Natural killer cell (primary cell): ENCODE measurements at regions of chr7 and their contacts with region 1.

Region 1: DNA sequence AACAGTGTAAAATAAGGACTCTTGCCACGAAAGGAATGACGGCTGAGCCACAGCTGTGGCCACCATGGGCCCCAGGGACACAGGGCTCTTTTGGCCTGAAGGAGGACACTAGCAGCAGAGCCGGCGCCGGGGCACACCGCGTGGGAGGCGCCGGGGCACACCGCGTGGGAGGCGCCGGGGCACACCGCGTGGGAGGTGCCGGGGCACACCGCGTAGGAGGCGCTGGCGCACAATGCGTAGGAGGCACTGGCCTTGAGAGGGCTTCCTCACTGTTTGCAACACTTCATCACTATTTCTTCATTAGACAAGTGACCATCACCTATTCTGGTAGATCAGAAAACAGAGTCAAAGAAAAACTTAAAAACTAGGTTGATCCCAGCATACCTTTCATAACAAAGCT is 23.4 kb downstream of the ESYT2 start:
- DNase-seq: no peak
- ATAC-seq: no peak
- H3K4me3 ChIP-seq: no peak overlapping the region
- H3K4me3 Mint-ChIP-seq: peak overlapping the region; percentile 37
- H3K27ac ChIP-seq: no peak overlapping the region
- H3K27ac Mint-ChIP-seq: peak overlapping the region; percentile 99
- H3K4me1 ChIP-seq: peaks cover 46% of the 10 kb centered on the region
- H3K4me1 Mint-ChIP-seq: peaks cover 56 to 75% of the 10 kb centered on the region in 2 donors
- H3K27me3 ChIP-seq: no peaks in the 10 kb centered on the region
- H3K27me3 Mint-ChIP-seq: no peaks in the 10 kb centered on the region
- CTCF ChIP-seq: no peak

Region 2: GRCh38 chr7:158595069-158595468 is 210.9 kb before region 1 on chr7:
- intact Hi-C with region 1: loop called (anchors 2 kb)
- DNase-seq: peak in 1 of 2 donors; percentile 47
- ATAC-seq: peak; percentile 51 to 84 (median 73)
- H3K4me3 ChIP-seq: no peak overlapping the region
- H3K4me3 Mint-ChIP-seq: no peak overlapping the region
- H3K27ac ChIP-seq: no peak overlapping the region
- H3K27ac Mint-ChIP-seq: no peak overlapping the region
- H3K4me1 ChIP-seq: no peaks in the 10 kb centered on the region
- H3K4me1 Mint-ChIP-seq: no peaks in the 10 kb centered on the region
- H3K27me3 ChIP-seq: no peaks in the 10 kb centered on the region
- H3K27me3 Mint-ChIP-seq: peaks cover 0 to 2% of the 10 kb centered on the region in 2 donors
- CTCF ChIP-seq: no peak

Region 3: DNA sequence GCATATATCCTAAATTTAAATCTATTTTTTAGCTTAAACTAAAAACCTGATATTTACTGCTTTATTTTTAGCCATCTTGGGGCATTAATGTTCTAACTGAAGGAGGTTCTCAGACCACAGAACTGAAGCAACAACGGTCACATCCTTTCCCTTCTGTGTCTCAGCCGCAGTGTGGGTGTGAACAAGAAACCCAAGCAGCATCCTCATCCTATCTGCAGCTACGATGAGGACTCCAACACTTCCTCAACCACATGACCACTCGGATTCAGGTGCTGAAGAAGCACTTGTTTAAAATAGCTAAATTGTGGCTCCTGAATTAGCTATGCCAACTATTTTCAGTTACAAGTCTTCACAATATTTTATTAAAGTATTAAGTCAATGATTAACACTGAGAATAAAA is 18.1 kb after region 1 on chr7:
- intact Hi-C with region 1: loop called (anchors 1 kb)
- DNase-seq: peak; percentile 82 to 92
- ATAC-seq: peak; percentile 64 to 87 (median 86)
- H3K4me3 ChIP-seq: peak overlapping the region; percentile 6
- H3K4me3 Mint-ChIP-seq: peak overlapping the region; percentile 79
- H3K27ac ChIP-seq: peak overlapping the region; percentile 66
- H3K27ac Mint-ChIP-seq: peak overlapping the region; percentile 88 to 89
- H3K4me1 ChIP-seq: peaks cover 55% of the 10 kb centered on the region
- H3K4me1 Mint-ChIP-seq: peaks cover 55% of the 10 kb centered on the region in 2 donors
- H3K27me3 ChIP-seq: no peaks in the 10 kb centered on the region
- H3K27me3 Mint-ChIP-seq: no peaks in the 10 kb centered on the region
- CTCF ChIP-seq: no peak

Region 4: GRCh38 chr7:158829342-158830210 is 23.6 kb after region 1 on chr7 and contains the start of gene ESYT2:
- intact Hi-C with region 1: loop called (anchors 1 kb)
- DNase-seq: peak; percentile 99 to 100
- ATAC-seq: peak; percentile 78 to 89 (median 80)
- H3K4me3 ChIP-seq: peak within 1 kb of the TSS; percentile 67
- H3K4me3 Mint-ChIP-seq: peak within 1 kb of the TSS; percentile 97
- H3K27ac ChIP-seq: peak within 1 kb of the TSS; percentile 97
- H3K27ac Mint-ChIP-seq: peak within 1 kb of the TSS; percentile 82 to 92
- H3K4me1 ChIP-seq: peaks cover 38% of the 10 kb centered on the region
- H3K4me1 Mint-ChIP-seq: peaks cover 37 to 41% of the 10 kb centered on the region in 2 donors
- H3K27me3 ChIP-seq: no peaks in the 10 kb centered on the region
- H3K27me3 Mint-ChIP-seq: no peaks in the 10 kb centered on the region
- CTCF ChIP-seq: no peak
- total RNA-seq, gene ESYT2: 137 to 163 (median 160) TPM

Region 5: DNA sequence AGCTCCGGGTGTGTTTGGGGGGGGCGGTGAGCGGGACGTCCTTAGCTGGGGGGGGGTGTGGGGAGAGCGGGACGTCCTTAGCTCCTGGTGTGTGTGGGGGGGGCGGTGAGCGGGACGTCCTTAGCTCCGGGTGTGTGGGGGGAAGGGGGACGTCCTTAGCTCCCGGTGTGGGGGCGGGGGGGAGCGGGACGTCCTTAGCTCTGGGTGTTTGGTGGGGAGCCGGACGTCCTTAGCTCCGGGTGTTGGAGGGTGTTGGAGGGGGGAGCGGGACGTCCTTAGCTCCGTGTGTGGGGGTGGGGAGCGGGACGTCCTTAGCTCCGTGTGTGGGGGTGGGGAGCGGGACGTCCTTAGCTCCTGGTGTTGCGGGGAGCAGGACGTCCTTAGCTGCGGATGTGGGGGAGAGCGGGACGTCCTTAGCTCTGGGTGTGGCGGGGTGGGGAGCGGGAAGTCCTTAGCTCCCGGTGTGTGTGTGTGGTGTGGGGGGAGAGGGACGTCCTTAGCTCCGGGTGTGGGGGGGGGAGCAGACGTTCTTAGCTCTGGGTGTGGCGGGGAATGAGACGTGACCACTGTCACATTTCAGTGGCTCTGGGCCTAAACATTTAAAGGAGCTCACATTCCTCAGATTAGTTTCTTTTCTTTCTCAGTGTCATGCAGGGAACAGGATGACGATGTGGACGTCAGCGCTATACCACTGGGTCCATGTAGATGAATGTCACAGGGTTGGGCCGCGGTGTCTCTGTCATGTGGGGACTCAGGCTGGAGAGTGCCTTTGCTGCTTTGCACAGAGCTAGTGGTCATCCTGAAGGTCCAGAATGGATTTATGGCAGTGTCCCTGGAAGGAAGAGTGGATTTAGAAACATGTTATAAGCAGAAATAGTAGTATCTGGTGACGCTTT is 57.9 kb after region 1 on chr7:
- intact Hi-C with region 1: no loop called
- DNase-seq: peak in 1 of 2 donors; percentile 49
- ATAC-seq: peak; percentile 70 to 88 (median 75)
- H3K4me3 ChIP-seq: peak overlapping the region; percentile 29
- H3K4me3 Mint-ChIP-seq: peak overlapping the region; percentile 96
- H3K27ac ChIP-seq: peak overlapping the region; percentile 20
- H3K27ac Mint-ChIP-seq: peak overlapping the region; percentile 91 to 93
- H3K4me1 ChIP-seq: peaks cover 19% of the 10 kb centered on the region
- H3K4me1 Mint-ChIP-seq: peaks cover 32 to 37% of the 10 kb centered on the region in 2 donors
- H3K27me3 ChIP-seq: no peaks in the 10 kb centered on the region
- H3K27me3 Mint-ChIP-seq: no peaks in the 10 kb centered on the region
- CTCF ChIP-seq: no peak